Mammary epithelial cell (primary cell): ENCODE measurements at regions of chr5 and their contacts with region 1.

Region 1: DNA sequence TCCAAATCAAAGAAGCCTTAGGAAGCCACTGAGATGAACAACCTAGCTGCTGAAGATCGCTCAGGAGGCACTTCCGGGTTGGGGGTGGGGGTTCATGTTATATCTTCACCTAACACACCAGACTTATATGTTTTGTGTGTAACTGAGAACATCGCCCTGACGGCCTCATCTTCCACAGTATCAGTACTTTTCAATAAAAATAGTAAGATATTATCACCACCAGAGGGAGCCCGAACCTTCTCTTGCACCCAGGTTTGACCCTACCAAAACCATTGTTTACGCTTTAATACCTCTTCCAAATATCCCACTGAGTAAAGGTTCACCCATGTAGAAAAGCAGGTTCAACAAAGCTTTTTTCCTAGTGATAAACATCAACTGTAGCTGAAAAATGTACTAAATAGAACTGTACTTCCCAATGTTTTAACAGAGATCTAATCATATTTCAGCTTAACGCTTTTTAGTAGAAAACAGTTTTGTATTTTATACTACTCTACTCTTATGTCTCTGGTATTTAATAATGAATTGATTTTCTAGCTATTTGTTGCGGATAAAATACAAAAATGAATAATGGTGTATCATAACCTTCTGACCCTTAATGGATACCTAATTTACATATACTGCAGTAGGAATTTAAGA is 244.0 kb downstream of the EPB41L4A start:
- DNase-seq: peak; percentile 36
- H3K4me3 ChIP-seq: no peak overlapping the region
- H3K27ac ChIP-seq: no peak overlapping the region
- H3K4me1 ChIP-seq: no peaks in the 10 kb centered on the region
- H3K27me3 ChIP-seq: no peaks in the 10 kb centered on the region
- CTCF ChIP-seq: peak; percentile 42 to 69

Region 2: DNA sequence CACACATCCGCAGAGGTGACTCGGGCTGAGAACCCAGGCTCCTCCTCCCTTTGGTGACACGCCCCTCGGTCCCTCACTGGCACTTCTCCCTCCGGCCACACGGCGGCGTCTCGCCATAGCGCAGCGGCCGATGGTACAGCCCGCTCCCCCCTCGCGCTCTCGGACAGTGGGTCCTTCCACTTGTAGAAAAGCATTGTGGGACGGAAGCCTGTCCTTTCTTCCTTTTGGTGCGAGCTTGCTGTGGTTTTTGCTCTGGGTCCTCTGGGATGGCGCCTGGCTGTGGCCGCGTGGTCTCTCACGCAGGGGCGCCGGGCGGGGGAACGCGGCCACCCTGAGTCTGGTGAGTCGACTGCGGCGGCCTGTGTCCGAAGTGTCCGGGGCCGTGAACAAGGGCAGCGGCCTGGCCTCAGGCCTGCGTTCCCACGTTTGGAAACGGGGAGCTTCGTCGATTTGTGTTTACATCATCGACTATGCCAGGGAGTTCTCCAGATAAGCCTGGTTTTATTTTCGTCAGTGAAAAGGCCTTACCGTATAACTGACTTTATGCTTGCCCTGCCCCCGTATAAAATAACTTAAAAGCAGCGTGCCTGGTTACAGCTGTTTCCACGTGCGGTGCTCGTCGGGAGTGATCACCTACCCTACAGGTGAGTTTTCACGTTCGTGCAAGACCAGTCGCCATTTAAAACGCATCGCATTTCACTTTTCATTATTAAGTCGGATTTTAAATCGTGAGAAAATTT is 14.3 kb before region 1 on chr5:
- CTCF ChIA-PET with region 1: no interaction called
- dilution Hi-C with region 1: no loop called
- in situ Hi-C with region 1: no loop called
- intact Hi-C with region 1: no loop called
- DNase-seq: peak; percentile 86
- H3K4me3 ChIP-seq: peak overlapping the region; percentile 68 to 100 (median 68)
- H3K27ac ChIP-seq: peak overlapping the region; percentile 85
- H3K4me1 ChIP-seq: peaks cover 7% of the 10 kb centered on the region
- H3K27me3 ChIP-seq: no peaks in the 10 kb centered on the region
- CTCF ChIP-seq: peak; percentile 99 to 100

Region 3: GRCh38 chr5:112419986-112420864 is 245.1 kb after region 1 on chr5:
- CTCF ChIA-PET with region 1: no interaction called
- dilution Hi-C with region 1: no loop called
- in situ Hi-C with region 1: loop called in 1 of 2 experiments (anchors 10 kb)
- intact Hi-C with region 1: loop called (anchors 1 kb)
- DNase-seq: peak; percentile 60
- H3K4me3 ChIP-seq: peak overlapping the region; percentile 52 to 57 (median 56)
- H3K27ac ChIP-seq: no peak overlapping the region
- H3K4me1 ChIP-seq: peaks cover 17% of the 10 kb centered on the region
- H3K27me3 ChIP-seq: peaks cover 18% of the 10 kb centered on the region
- CTCF ChIP-seq: peak; percentile 56 to 79

Region 4: GRCh38 chr5:112492291-112492690 is 317.2 kb after region 1 on chr5:
- CTCF ChIA-PET with region 1: no interaction called
- dilution Hi-C with region 1: no loop called
- in situ Hi-C with region 1: no loop called
- intact Hi-C with region 1: loop called (anchors 1 kb)
- DNase-seq: peak; percentile 69
- H3K4me3 ChIP-seq: no peak overlapping the region
- H3K27ac ChIP-seq: no peak overlapping the region
- H3K4me1 ChIP-seq: no peaks in the 10 kb centered on the region
- H3K27me3 ChIP-seq: no peaks in the 10 kb centered on the region
- CTCF ChIP-seq: peak; percentile 73 to 78

Region 5: DNA sequence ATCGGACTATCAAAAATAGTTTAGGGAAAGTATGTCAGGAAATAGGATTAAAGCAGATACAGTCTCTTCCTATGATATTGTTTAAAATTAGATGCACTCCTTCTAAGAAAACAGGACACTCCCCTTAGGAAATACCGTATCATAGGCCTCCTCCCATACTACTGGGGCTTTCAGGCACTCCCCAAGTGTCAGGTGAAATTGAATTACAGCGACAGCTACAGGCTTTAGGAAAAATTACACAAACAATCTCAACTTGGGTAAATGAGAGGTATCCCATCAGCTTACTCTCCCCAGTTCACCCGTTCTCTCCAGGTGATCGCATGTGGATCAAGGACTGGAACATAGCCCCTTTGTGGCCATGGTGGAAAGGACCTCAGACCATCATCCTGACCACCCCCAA is 354.4 kb after region 1 on chr5:
- CTCF ChIA-PET with region 1: no interaction called
- dilution Hi-C with region 1: no loop called
- in situ Hi-C with region 1: no loop called
- intact Hi-C with region 1: loop called (anchors 1 kb)
- DNase-seq: peak; percentile 28
- H3K4me3 ChIP-seq: no peak overlapping the region
- H3K27ac ChIP-seq: no peak overlapping the region
- H3K4me1 ChIP-seq: no peaks in the 10 kb centered on the region
- H3K27me3 ChIP-seq: no peaks in the 10 kb centered on the region
- CTCF ChIP-seq: peak; percentile 49 to 64

Region 6: GRCh38 chr5:112757468-112758208 is 582.6 kb after region 1 on chr5:
- CTCF ChIA-PET with region 1: no interaction called
- dilution Hi-C with region 1: no loop called
- in situ Hi-C with region 1: no loop called
- intact Hi-C with region 1: loop called (anchors 5 kb)
- DNase-seq: peak; percentile 34
- H3K4me3 ChIP-seq: no peak overlapping the region
- H3K27ac ChIP-seq: no peak overlapping the region
- H3K4me1 ChIP-seq: peaks cover 4% of the 10 kb centered on the region
- H3K27me3 ChIP-seq: no peaks in the 10 kb centered on the region
- CTCF ChIP-seq: peak; percentile 71 to 82

Region 7: DNA sequence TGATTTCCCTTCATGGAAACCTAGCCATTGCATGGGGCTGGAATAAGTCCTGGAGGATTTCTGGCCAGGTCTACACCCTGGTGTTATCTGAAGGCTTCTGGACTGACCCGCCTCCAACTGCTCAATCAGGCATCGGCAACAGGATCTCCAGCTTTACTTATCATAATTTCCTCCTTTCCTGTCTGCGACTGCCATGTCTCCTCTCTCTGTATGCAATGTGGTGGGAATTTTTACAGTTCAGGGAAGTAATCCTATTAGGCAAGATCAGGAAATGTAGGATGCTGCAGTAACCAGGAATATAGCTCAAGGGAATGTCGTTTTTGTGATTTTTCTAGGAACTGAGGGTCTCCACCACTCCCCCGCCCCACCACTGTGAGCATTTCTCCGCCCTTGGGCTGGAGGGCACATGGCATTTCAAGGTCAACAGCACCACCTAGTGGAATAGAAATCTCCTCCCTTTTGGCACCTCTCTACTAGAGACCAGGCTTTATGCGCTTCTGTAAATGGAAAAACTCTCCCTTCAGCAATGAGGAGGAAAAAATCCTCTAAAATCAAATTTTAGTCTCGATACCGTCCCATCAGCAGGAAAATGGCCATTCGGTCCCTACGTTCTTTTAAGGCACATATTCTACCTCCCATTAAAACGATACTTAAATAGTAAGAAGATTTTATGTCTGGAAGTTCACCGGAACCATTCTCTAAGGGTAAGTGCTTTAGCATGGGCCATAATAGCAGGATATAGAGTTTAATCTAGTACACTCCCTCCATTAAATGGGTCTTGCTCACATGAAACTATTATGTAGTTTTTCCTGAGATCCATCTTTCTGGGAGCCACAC is 1431.4 kb after region 1 on chr5:
- CTCF ChIA-PET with region 1: no interaction called
- dilution Hi-C with region 1: no loop called
- in situ Hi-C with region 1: no loop called
- intact Hi-C with region 1: loop called (anchors 1 kb)
- DNase-seq: peak; percentile 38
- H3K4me3 ChIP-seq: no peak overlapping the region
- H3K27ac ChIP-seq: no peak overlapping the region
- H3K4me1 ChIP-seq: peaks cover 10% of the 10 kb centered on the region
- H3K27me3 ChIP-seq: no peaks in the 10 kb centered on the region
- CTCF ChIP-seq: peak; percentile 70 to 80